ENCODE measurements at regions of chr1 and their contacts with region 1.

Region 1: DNA sequence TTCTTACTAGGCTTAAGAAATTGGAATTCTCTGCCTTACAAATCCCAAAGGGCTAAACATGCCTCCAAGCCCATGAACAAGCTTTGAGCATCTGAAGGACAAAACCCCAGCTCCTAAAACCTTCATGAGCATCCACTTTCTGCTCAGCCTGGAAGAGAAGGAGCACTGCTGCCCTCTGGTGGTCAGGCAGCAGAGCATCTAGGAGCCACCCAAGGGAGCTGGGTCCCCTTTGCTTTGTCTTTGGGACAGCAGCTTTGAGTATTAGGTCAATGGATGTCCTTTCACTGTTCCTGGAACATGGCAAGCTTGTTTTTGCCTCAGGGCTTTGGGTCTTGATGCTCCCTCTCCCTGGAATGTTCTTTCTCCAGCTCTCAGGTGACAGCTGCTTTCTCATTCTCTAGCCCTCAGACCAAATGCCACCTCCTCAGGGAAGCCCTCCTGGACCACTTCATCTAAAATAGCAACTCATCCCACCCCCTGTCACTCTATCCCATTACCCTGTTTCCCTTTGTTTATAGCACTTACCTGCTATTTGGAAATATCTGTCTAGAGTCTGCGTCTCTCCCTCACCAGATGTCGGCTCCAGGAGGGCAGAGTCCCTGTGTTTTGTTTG is 25.7 kb downstream of the RAB7B start:
- DNase-seq: peak; percentile 74 to 81
- H3K4me3 ChIP-seq: no peak overlapping the region
- H3K4me3 Mint-ChIP-seq: no peak overlapping the region
- H3K27ac Mint-ChIP-seq: no peak overlapping the region
- H3K4me1 ChIP-seq: 0 out of 2 replicates have a peak, but pooled peaks cover 5% of the 10 kb centered on the region
- H3K4me1 Mint-ChIP-seq: no peaks in the 10 kb centered on the region
- H3K27me3 ChIP-seq: no peaks in the 10 kb centered on the region
- H3K27me3 Mint-ChIP-seq: peaks cover 9% of the 10 kb centered on the region
- CTCF ChIP-seq: peak; percentile 94 to 97

Region 2: GRCh38 chr1:205791568-205792180 is 185.8 kb before region 1 on chr1:
- CTCF ChIA-PET with region 1: interaction called, 98 read pairs
- POLR2A ChIA-PET with region 1: no interaction called
- intact Hi-C with region 1: loop called (anchors 1 kb)
- DNase-seq: peak; percentile 56 to 75
- H3K4me3 ChIP-seq: no peak overlapping the region
- H3K4me3 Mint-ChIP-seq: no peak overlapping the region
- H3K27ac Mint-ChIP-seq: no peak overlapping the region
- H3K4me1 ChIP-seq: no peaks in the 10 kb centered on the region
- H3K4me1 Mint-ChIP-seq: no peaks in the 10 kb centered on the region
- H3K27me3 ChIP-seq: no peaks in the 10 kb centered on the region
- H3K27me3 Mint-ChIP-seq: no peaks in the 10 kb centered on the region
- CTCF ChIP-seq: peak; percentile 90

Region 3: GRCh38 chr1:205812878-205813754 is 164.4 kb before region 1 on chr1 and contains the start of gene SLC41A1:
- CTCF ChIA-PET with region 1: interaction called, 13 read pairs
- POLR2A ChIA-PET with region 1: no interaction called
- intact Hi-C with region 1: no loop called
- DNase-seq: peak; percentile 87 to 89
- H3K4me3 ChIP-seq: peak within 1 kb of the TSS; percentile 81
- H3K4me3 Mint-ChIP-seq: peak within 1 kb of the TSS; percentile 95
- H3K27ac Mint-ChIP-seq: peak within 1 kb of the TSS; percentile 76
- H3K4me1 ChIP-seq: peaks cover 5% of the 10 kb centered on the region; the same call in 1 of the 2 replicates
- H3K4me1 Mint-ChIP-seq: peaks cover 15% of the 10 kb centered on the region
- H3K27me3 ChIP-seq: no peaks in the 10 kb centered on the region
- H3K27me3 Mint-ChIP-seq: no peaks in the 10 kb centered on the region
- CTCF ChIP-seq: no peak
- total RNA-seq, gene SLC41A1: 10.8 and 12.5 TPM in 2 replicates

Region 4: DNA sequence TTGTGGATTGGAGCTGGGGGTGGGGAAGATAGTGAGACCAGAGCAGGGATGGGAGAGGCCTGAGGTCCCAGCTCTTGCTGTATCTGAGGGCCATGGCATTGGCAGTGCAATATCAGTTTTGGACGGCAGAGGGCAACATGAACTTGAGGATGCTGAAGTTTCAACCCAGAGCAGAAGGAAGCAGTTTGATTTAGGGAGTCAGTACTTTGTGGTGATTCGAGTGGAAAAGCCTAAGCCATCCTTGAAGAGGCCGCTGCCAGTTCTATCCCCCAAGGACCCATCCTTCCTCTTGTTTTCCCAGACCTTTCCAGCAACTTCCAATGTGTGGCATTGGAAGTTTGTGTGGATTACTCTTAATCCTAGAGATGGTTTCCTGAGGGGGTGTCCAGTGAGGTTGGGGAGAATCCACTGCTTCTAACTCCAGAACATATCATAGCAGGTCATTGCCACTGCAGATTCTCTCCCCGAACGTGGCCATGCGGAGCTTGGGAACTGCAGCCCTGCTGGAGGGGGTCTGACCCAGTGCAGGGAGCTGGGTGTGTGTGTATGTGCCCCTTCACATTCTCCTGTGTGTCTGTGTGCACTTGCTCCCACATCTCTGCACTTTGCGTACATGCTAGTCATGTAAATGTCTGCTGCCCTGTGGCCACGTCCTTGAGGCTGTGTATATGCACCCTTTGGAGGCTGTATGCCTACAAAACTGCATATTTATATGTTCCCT is 58.3 kb before region 1 on chr1:
- CTCF ChIA-PET with region 1: interaction called, 242 read pairs
- POLR2A ChIA-PET with region 1: no interaction called
- intact Hi-C with region 1: loop called (anchors 1 kb)
- DNase-seq: peak; percentile 77
- H3K4me3 ChIP-seq: no peak overlapping the region
- H3K4me3 Mint-ChIP-seq: no peak overlapping the region
- H3K27ac Mint-ChIP-seq: no peak overlapping the region
- H3K4me1 ChIP-seq: peaks cover 4% of the 10 kb centered on the region
- H3K4me1 Mint-ChIP-seq: no peaks in the 10 kb centered on the region
- H3K27me3 ChIP-seq: no peaks in the 10 kb centered on the region
- H3K27me3 Mint-ChIP-seq: no peaks in the 10 kb centered on the region
- CTCF ChIP-seq: peak; percentile 84 to 89

Region 5: DNA sequence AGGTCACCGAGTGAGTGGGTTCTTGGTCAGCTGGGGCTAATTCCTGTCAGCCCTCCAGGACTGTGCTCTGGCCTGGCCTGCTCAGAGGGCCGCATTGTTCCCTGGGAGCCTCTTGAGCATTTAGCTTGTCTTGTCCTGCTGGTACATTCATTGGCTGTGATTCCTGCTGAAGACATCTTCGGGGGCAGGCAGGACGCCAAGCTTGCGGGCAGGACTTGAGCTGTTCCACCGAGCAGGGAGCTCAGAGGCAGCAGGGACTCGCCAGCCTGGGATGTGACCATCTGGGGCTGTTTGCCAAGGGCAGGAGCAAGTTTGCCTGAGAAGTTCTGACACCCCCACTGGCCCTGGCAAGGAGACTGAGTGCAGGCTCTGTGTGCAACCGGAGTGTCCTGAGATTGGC is 27.2 kb before region 1 on chr1:
- CTCF ChIA-PET with region 1: interaction called, 10 read pairs
- POLR2A ChIA-PET with region 1: no interaction called
- intact Hi-C with region 1: no loop called
- DNase-seq: no peak
- H3K4me3 ChIP-seq: no peak overlapping the region
- H3K4me3 Mint-ChIP-seq: no peak overlapping the region
- H3K27ac Mint-ChIP-seq: no peak overlapping the region
- H3K4me1 ChIP-seq: peaks cover 6% of the 10 kb centered on the region; the same call in 1 of the 2 replicates
- H3K4me1 Mint-ChIP-seq: no peaks in the 10 kb centered on the region
- H3K27me3 ChIP-seq: no peaks in the 10 kb centered on the region
- H3K27me3 Mint-ChIP-seq: peaks cover 18% of the 10 kb centered on the region
- CTCF ChIP-seq: no peak

Region 6: GRCh38 chr1:206010070-206010469 is 32.6 kb after region 1 on chr1:
- CTCF ChIA-PET with region 1: no interaction called
- POLR2A ChIA-PET with region 1: no interaction called
- intact Hi-C with region 1: no loop called
- DNase-seq: no peak
- H3K4me3 ChIP-seq: no peak overlapping the region
- H3K4me3 Mint-ChIP-seq: no peak overlapping the region
- H3K27ac Mint-ChIP-seq: no peak overlapping the region
- H3K4me1 ChIP-seq: no peaks in the 10 kb centered on the region
- H3K4me1 Mint-ChIP-seq: no peaks in the 10 kb centered on the region
- H3K27me3 ChIP-seq: no peaks in the 10 kb centered on the region
- H3K27me3 Mint-ChIP-seq: no peaks in the 10 kb centered on the region
- CTCF ChIP-seq: no peak

Measured in Caco-2 (cell line).